ENCODE measurements at regions of chr15 and their contacts with region 1.

Region 1: GRCh38 chr15:75237316-75237982 is 20.7 kb upstream of the GOLGA6C start:
- DNase-seq: no peak
- ATAC-seq: no peak
- H3K4me3 ChIP-seq: no peak overlapping the region
- H3K27ac ChIP-seq: no peak overlapping the region
- H3K4me1 ChIP-seq: no peaks in the 10 kb centered on the region
- H3K27me3 ChIP-seq: no peaks in the 10 kb centered on the region
- CTCF ChIP-seq: no peak
- EP300 ChIP-seq: no peak
- POLR2A ChIP-seq: no peak
- RAD21 ChIP-seq: no peak

Region 2: DNA sequence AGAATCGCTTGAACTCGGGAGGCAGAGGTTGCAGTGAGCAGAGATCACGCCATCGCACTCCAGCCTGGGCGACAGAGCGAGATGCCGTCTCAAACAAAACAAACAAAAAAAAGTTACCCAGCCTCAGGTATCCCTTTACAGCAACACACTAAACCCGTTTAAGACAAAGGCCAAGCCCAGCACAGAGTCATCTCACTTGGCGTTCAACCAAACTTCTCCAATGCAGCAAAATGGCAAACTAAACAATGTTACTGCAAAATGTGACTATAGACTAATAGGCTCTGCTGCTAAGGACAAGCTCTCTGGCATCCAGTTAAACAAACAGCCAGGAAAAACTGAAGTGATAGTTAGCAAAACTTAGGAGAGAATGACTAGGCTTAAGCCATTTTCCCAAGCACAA is 324.4 kb before region 1 on chr15:
- CTCF ChIA-PET with region 1: no interaction called
- POLR2A ChIA-PET with region 1: no interaction called
- RAD21 ChIA-PET with region 1: no interaction called
- SMC1A ChIA-PET with region 1: no interaction called
- in situ Hi-C with region 1: no loop called
- intact Hi-C with region 1: no loop called
- DNase-seq: no peak
- ATAC-seq: no peak
- H3K4me3 ChIP-seq: no peak overlapping the region
- H3K27ac ChIP-seq: no peak overlapping the region
- H3K4me1 ChIP-seq: no peaks in the 10 kb centered on the region
- H3K27me3 ChIP-seq: no peaks in the 10 kb centered on the region
- CTCF ChIP-seq: no peak
- EP300 ChIP-seq: no peak
- POLR2A ChIP-seq: no peak
- RAD21 ChIP-seq: no peak

Region 3: GRCh38 chr15:75314552-75315290 is 77.3 kb after region 1 on chr15:
- CTCF ChIA-PET with region 1: no interaction called
- POLR2A ChIA-PET with region 1: no interaction called
- RAD21 ChIA-PET with region 1: no interaction called
- SMC1A ChIA-PET with region 1: no interaction called
- in situ Hi-C with region 1: loop called (anchors 5 kb)
- intact Hi-C with region 1: no loop called
- DNase-seq: no peak
- ATAC-seq: no peak
- H3K4me3 ChIP-seq: no peak overlapping the region
- H3K27ac ChIP-seq: no peak overlapping the region
- H3K4me1 ChIP-seq: no peaks in the 10 kb centered on the region
- H3K27me3 ChIP-seq: no peaks in the 10 kb centered on the region; a peak in 1 of 4 replicates
- CTCF ChIP-seq: no peak
- EP300 ChIP-seq: no peak
- POLR2A ChIP-seq: no peak
- RAD21 ChIP-seq: no peak